Body of pancreas (tissue), 4 donors: ENCODE measurements at regions of chr1 and their contacts with region 1.

Region 1: DNA sequence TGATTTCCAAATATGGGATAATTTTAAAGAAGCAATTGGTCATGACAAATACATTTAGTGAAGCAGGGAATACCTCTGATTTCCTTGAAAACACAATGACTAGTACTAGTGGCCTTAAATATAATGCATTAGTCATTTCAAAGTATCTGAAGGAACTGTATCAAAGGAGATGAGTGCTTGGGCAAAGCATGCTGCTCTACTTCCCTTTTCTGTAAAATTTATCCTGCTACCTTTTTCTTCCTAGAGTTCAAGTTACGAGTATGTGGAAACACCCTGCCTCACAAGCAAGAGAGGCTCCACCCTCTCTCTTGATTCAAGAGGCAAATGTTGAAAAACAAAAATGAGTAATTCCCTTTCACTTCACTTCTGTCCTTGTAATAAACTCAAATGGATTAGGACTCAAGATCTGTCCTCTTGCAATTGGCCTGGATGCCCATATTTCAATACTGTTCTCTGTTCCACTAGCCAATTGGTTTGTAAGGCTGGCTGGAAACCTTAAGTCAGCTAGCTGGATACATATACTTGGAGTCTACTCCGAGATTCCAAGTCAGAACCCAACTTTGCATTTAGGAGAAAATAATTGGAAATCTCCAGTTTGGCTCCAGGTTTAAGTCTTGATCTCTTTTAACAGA is 92.5 kb downstream of the CDC42BPA start:
- DNase-seq: no peak
- ATAC-seq: no peak
- H3K4me3 ChIP-seq: no peak overlapping the region
- H3K27ac ChIP-seq: no peak overlapping the region
- H3K4me1 ChIP-seq: peaks cover 6% of the 10 kb centered on the region
- H3K27me3 ChIP-seq: no peaks in the 10 kb centered on the region
- CTCF ChIP-seq: no peak
- POLR2A ChIP-seq: no peak

Region 2: DNA sequence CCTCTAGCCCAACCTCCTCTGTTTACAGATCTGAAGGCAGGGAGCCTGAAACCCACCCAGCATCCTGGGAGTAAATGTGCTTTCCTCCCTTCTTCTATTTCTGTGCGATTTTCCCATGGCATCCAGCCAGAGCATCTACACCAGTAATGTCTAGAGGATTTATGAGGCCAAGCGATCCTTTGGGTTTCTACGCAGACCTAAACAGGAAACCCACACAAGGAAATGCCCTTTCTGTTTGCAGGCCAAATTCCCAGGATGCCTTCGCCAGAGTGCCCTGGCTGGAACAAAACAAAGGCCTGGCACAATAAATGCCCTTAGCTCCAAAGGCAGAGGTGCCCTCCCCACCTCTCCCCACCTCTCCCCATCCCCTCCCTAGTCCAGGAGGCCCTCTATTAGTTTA is 203.0 kb after region 1 on chr1:
- intact Hi-C with region 1: loop called (anchors 10 kb)
- DNase-seq: peak; percentile 33 to 62 (median 46)
- ATAC-seq: peak; percentile 70
- H3K4me3 ChIP-seq: no peak overlapping the region
- H3K27ac ChIP-seq: peak overlapping the region; percentile 17 to 73 (median 54)
- H3K4me1 ChIP-seq: peaks cover 17% of the 10 kb centered on the region
- H3K27me3 ChIP-seq: no peaks in the 10 kb centered on the region
- CTCF ChIP-seq: no peak
- POLR2A ChIP-seq: no peak